ENCODE measurements at regions of chr16 and their contacts with region 1.

Region 1: GRCh38 chr16:85717393-85718121 is 28.8 kb upstream of the GINS2 start:
- DNase-seq: peak; percentile 41 to 51 (median 47)
- H3K4me3 ChIP-seq: no peak overlapping the region
- H3K4me3 Mint-ChIP-seq: no peak overlapping the region
- H3K27ac ChIP-seq: no peak overlapping the region
- H3K27ac Mint-ChIP-seq: no peak overlapping the region
- H3K4me1 ChIP-seq: peaks cover 6% of the 10 kb centered on the region
- H3K4me1 Mint-ChIP-seq: peaks cover 2 to 15% (median 8%) of the 10 kb centered on the region in 4 donors
- H3K27me3 ChIP-seq: no peaks in the 10 kb centered on the region
- H3K27me3 Mint-ChIP-seq: peaks cover 2 to 5% of the 10 kb centered on the region in 2 donors

Region 2: DNA sequence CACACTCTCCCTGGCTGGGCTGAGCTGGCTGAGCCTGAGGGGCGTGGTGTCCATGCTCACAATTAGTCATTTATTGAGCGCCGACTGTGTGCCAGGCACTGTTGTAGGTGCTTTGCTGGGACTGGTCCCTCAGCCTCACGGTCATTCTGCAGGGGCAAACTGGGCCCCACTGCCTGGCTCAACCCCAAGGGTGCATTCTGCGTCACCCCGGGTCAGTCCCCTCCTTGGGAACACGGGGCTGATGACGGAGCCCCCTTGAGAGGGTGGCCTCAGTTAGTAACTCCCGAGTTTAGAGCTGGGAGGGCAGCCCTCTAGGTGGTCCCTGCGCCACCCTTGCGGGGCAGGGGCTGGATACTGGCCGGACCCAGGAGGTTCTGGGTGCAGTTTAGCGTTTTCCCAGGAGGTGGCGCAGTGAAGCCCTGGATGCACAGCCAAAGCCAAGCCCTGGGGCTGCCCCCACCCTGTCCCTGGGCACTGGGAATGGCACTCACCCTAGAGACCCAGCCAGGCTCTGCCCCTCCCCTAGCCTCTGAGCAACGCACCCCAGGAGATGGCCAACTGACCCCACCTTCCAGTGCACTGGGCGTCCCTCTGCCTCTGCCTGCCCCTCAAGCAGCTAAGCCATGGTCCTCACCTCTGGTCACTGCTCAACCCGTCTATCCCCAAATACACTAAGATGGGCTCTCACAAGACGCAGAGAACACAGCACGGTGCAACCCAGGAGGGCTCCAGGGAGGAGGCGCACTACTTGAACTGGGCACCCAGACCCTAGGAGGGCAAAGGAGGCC is 347.6 kb before region 1 on chr16:
- CTCF ChIA-PET with region 1: no interaction called
- POLR2A ChIA-PET with region 1: no interaction called
- intact Hi-C with region 1: loop called (anchors 2 kb)
- DNase-seq: peak in 4 of 5 donors; percentile 12 to 19 (median 14)
- H3K4me3 ChIP-seq: no peak overlapping the region
- H3K4me3 Mint-ChIP-seq: no peak overlapping the region
- H3K27ac ChIP-seq: no peak overlapping the region
- H3K27ac Mint-ChIP-seq: no peak overlapping the region
- H3K4me1 ChIP-seq: no peaks in the 10 kb centered on the region
- H3K4me1 Mint-ChIP-seq: peaks cover 0 to 5% (median 1%) of the 10 kb centered on the region in 4 donors
- H3K27me3 ChIP-seq: no peaks in the 10 kb centered on the region
- H3K27me3 Mint-ChIP-seq: peaks cover 1% of the 10 kb centered on the region in 2 donors

Region 3: DNA sequence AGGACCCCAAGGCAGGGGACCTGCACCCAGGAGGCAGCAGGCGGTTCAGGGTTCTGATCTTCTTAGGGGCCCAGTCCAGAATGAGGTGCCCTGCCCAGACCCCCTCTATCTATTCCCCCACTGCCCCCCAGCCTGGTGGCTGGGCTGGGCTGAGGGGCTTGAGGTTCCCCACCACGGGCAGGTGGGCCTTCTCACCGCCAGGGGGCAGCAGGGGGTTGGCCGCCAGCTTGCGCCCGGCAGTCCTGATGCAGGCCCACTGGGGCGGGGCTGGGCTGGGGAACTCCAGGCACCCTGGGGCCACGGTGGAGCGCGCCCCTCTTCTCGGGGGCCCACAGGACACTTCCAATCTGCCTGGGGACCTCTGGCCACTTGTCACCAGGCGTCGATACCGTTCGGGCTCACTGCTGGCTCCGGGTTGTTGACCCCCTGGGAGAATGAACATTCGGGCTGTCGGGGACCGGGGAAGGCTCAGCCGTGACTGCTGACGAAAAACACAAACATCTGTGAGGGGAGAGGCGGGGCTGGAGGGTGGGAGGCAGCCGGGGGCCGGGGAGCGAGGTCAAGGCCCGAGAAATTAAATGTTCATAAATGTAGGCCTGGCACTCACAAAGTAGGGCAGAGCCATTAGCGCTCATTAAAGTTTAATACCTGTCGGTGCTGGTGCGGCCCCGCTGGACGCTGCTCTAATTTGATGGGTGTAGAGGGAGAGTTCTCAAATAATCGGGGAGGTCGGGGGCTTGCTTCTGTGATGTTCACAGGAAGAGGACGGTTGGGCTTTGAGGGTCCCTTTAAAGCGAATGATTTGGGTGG is 323.7 kb before region 1 on chr16:
- CTCF ChIA-PET with region 1: no interaction called
- POLR2A ChIA-PET with region 1: no interaction called
- intact Hi-C with region 1: loop called (anchors 2 kb)
- DNase-seq: peak; percentile 40 to 55 (median 50)
- H3K4me3 ChIP-seq: no peak overlapping the region
- H3K4me3 Mint-ChIP-seq: no peak overlapping the region
- H3K27ac ChIP-seq: no peak overlapping the region
- H3K27ac Mint-ChIP-seq: no peak overlapping the region
- H3K4me1 ChIP-seq: no peaks in the 10 kb centered on the region
- H3K4me1 Mint-ChIP-seq: no peaks in the 10 kb centered on the region
- H3K27me3 ChIP-seq: no peaks in the 10 kb centered on the region
- H3K27me3 Mint-ChIP-seq: peaks cover 0 to 2% of the 10 kb centered on the region in 2 donors

Region 4: DNA sequence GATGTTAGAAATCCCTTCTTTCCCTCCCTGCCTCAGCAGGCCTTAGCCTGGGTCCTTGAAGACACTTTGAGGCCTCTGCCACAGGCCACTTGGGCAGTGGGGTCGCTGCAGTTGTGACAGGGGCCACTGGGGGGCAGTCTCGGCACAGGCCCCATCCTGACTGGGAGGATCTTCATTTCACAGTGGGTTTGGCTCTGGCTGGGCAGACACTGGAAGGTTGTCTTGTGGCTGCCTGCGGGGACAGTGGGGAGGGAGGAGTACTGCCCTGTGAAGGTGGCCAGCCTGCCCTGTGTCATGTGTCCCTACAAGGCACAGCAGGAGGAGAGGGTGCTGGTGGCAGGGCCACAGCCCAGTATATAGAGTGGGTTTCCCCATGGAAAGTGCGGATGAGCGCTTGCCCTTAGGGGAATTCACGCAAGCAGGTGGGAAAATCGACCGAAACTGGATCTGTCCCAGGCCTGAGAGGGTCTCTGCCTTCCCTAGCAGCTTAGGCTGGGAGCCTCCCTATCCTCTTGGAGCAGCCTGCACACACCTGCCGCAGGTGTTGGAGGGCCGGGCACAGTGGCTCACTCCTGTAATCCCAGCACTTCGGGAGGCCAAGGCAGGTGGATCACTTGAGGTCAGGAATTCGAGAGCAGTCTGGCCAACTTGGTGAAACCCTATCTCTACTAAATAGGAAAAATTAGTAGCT is 57.6 kb before region 1 on chr16:
- CTCF ChIA-PET with region 1: interaction called, 22 read pairs
- POLR2A ChIA-PET with region 1: no interaction called
- intact Hi-C with region 1: loop called (anchors 1 kb)
- DNase-seq: peak; percentile 35 to 61 (median 44)
- H3K4me3 ChIP-seq: no peak overlapping the region
- H3K4me3 Mint-ChIP-seq: no peak overlapping the region
- H3K27ac ChIP-seq: no peak overlapping the region
- H3K27ac Mint-ChIP-seq: peak overlapping the region in 4 of 7 donors; percentile 19 to 89 (median 52)
- H3K4me1 ChIP-seq: no peaks in the 10 kb centered on the region
- H3K4me1 Mint-ChIP-seq: no peaks in the 10 kb centered on the region
- H3K27me3 ChIP-seq: no peaks in the 10 kb centered on the region
- H3K27me3 Mint-ChIP-seq: no peaks in the 10 kb centered on the region

Region 5: GRCh38 chr16:85675251-85675927 is 42.2 kb before region 1 on chr16:
- CTCF ChIA-PET with region 1: interaction called, 5 read pairs
- POLR2A ChIA-PET with region 1: no interaction called
- intact Hi-C with region 1: loop called (anchors 1 kb)
- DNase-seq: no peak
- H3K4me3 ChIP-seq: no peak overlapping the region
- H3K4me3 Mint-ChIP-seq: no peak overlapping the region
- H3K27ac ChIP-seq: no peak overlapping the region
- H3K27ac Mint-ChIP-seq: peak overlapping the region in 2 of 7 donors; percentile 29 to 66
- H3K4me1 ChIP-seq: peaks cover 2% of the 10 kb centered on the region
- H3K4me1 Mint-ChIP-seq: peaks cover 2 to 10% (median 6%) of the 10 kb centered on the region in 4 donors
- H3K27me3 ChIP-seq: no peaks in the 10 kb centered on the region
- H3K27me3 Mint-ChIP-seq: no peaks in the 10 kb centered on the region

Region 6: GRCh38 chr16:86029131-86029741 is 311.7 kb after region 1 on chr16:
- CTCF ChIA-PET with region 1: no interaction called
- POLR2A ChIA-PET with region 1: no interaction called
- intact Hi-C with region 1: no loop called
- DNase-seq: no peak
- H3K4me3 ChIP-seq: no peak overlapping the region
- H3K4me3 Mint-ChIP-seq: no peak overlapping the region
- H3K27ac ChIP-seq: no peak overlapping the region
- H3K27ac Mint-ChIP-seq: no peak overlapping the region
- H3K4me1 ChIP-seq: no peaks in the 10 kb centered on the region
- H3K4me1 Mint-ChIP-seq: no peaks in the 10 kb centered on the region
- H3K27me3 ChIP-seq: no peaks in the 10 kb centered on the region
- H3K27me3 Mint-ChIP-seq: peaks cover 12 to 17% of the 10 kb centered on the region in 2 donors

Measured in CD4-positive, alpha-beta memory T cell (primary cell).